ENCODE measurements at regions of chr7 and their contacts with region 1.

Region 1: GRCh38 chr7:147249956-147250355 is 1133.4 kb downstream of the CNTNAP2 start:
- DNase-seq: no peak
- H3K4me3 ChIP-seq: no peak overlapping the region
- H3K27ac ChIP-seq: no peak overlapping the region
- H3K4me1 ChIP-seq: no peaks in the 10 kb centered on the region
- H3K27me3 ChIP-seq: no peaks in the 10 kb centered on the region
- CTCF ChIP-seq: no peak
- POLR2A ChIP-seq: no peak

Region 2: DNA sequence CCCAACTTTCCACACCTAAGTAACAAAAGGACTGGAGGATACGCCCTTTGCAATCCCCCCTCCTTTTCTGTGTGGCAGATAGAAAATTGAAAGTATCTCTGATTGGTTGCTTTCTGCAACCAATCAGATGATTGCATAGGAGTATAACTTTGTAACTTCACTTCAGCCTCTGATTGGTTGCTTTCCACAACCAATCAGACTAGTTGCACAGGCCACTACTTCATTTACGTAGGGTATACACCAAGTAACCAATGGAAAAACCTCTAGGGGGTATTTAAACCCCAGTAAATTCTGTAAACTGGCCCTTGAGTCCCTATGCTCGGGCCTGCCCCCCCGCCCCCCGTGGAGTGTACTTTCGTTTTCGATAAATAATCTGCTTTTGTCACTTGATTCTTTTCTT is 53.0 kb before region 1 on chr7:
- intact Hi-C with region 1: no loop called
- DNase-seq: no peak
- H3K4me3 ChIP-seq: no peak overlapping the region
- H3K27ac ChIP-seq: no peak overlapping the region
- H3K4me1 ChIP-seq: no peaks in the 10 kb centered on the region
- H3K27me3 ChIP-seq: no peaks in the 10 kb centered on the region
- CTCF ChIP-seq: no peak
- POLR2A ChIP-seq: no peak

Region 3: GRCh38 chr7:147478796-147479195 is 228.8 kb after region 1 on chr7:
- intact Hi-C with region 1: no loop called
- DNase-seq: no peak
- H3K4me3 ChIP-seq: no peak overlapping the region
- H3K27ac ChIP-seq: no peak overlapping the region
- H3K4me1 ChIP-seq: no peaks in the 10 kb centered on the region
- H3K27me3 ChIP-seq: no peaks in the 10 kb centered on the region
- CTCF ChIP-seq: no peak
- POLR2A ChIP-seq: no peak

Region 4: DNA sequence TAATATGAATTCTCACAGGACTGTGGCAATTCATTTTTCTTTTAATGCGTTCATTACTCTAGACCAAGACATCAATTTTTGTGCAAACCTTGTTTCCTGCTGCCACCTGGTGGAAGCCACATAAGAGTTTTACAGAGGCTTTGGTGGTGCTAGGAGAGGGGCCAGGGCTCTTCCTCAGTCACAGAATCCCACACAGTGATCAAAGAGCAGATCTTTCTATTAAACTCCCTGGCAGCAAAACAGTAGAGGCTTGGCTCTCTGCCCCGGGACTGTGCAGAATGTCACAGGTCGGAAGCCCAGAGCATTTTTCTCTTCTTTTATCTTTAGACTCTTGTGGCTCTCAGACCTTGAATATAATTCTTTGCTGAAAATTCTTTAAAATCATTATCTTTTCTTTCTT is 834.2 kb after region 1 on chr7:
- intact Hi-C with region 1: loop called (anchors 10 kb)
- DNase-seq: no peak
- H3K4me3 ChIP-seq: no peak overlapping the region
- H3K27ac ChIP-seq: no peak overlapping the region
- H3K4me1 ChIP-seq: no peaks in the 10 kb centered on the region
- H3K27me3 ChIP-seq: no peaks in the 10 kb centered on the region
- CTCF ChIP-seq: peak in 9 of 11 experiments; percentile 19 to 59 (median 41)
- POLR2A ChIP-seq: no peak

Measured in spleen (tissue), 13 donors.